ENCODE measurements at regions of chr16 and their contacts with region 1.

Region 1: GRCh38 chr16:78122774-78123315 is 23.4 kb downstream of the WWOX start:
- DNase-seq: no peak
- H3K4me3 ChIP-seq: no peak overlapping the region
- H3K27ac ChIP-seq: peak overlapping the region in 1 of 8 donors; percentile 26
- H3K4me1 ChIP-seq: peaks cover 0 to 11% (median 5%) of the 10 kb centered on the region in 6 donors
- H3K27me3 ChIP-seq: no peaks in the 10 kb centered on the region
- CTCF ChIP-seq: peak in 9 of 11 experiments; percentile 24 to 61 (median 51)
- POLR2A ChIP-seq: no peak

Region 2: GRCh38 chr16:78235168-78235800 is 112.4 kb after region 1 on chr16:
- intact Hi-C with region 1: loop called (anchors 5 kb)
- DNase-seq: peak; percentile 85
- H3K4me3 ChIP-seq: no peak overlapping the region
- H3K27ac ChIP-seq: no peak overlapping the region
- H3K4me1 ChIP-seq: peaks cover 0 to 5% (median 0%) of the 10 kb centered on the region in 6 donors
- H3K27me3 ChIP-seq: no peaks in the 10 kb centered on the region
- CTCF ChIP-seq: peak; percentile 73 to 94 (median 86)
- POLR2A ChIP-seq: no peak

Region 3: GRCh38 chr16:78770353-78771091 is 647.7 kb after region 1 on chr16:
- intact Hi-C with region 1: loop called (anchors 5 kb)
- DNase-seq: peak; percentile 95
- H3K4me3 ChIP-seq: peak overlapping the region in 1 of 8 donors; percentile 34
- H3K27ac ChIP-seq: peak overlapping the region in 5 of 8 donors; percentile 28 to 55 (median 49)
- H3K4me1 ChIP-seq: peaks cover 5 to 24% (median 11%) of the 10 kb centered on the region in 6 donors
- H3K27me3 ChIP-seq: no peaks in the 10 kb centered on the region
- CTCF ChIP-seq: peak; percentile 82 to 96 (median 91)
- POLR2A ChIP-seq: no peak

Region 4: DNA sequence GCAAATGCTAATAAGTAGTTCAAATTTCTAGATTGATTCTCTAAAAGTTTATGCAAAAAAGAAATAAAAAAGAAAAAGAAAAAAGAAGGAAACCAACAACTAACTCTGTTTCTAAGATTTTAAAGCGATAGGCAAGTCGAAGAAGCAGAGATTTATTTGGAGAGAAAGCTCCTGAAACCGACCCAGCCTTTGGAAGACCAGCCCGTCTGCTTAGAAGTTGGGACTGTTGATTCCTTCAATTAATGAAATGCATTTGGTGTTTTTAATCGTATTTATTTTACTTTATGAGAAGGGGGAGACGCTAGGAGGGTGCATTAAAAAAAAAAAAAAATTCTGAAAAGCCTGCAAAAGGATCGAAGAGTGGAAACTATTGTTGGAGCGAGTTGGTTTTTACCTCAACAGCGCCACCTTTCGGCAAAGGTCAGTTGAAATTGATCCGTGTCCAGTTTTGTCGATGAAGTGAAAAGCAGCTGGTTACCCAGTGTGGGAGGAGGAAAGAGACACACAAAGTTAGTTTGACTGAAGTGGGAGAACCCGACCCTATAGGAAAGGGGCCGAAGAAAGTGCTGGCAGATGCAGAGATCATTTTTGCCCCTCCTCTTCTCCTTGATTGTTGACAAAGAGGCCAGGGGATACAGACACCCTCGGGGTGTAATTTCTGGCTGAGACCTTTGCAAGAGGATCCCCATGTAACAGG is 1479.2 kb after region 1 on chr16:
- intact Hi-C with region 1: loop called (anchors 10 kb)
- DNase-seq: peak; percentile 83
- H3K4me3 ChIP-seq: peak overlapping the region; percentile 60 to 91 (median 68)
- H3K27ac ChIP-seq: peak overlapping the region; percentile 85 to 94 (median 92)
- H3K4me1 ChIP-seq: peaks cover 12 to 57% (median 26%) of the 10 kb centered on the region in 6 donors
- H3K27me3 ChIP-seq: peaks cover 0 to 62% (median 6%) of the 10 kb centered on the region in 7 donors
- CTCF ChIP-seq: peak; percentile 52 to 81 (median 70)
- POLR2A ChIP-seq: no peak